WTC11 (cell line): ENCODE measurements at regions of chr20 and their contacts with region 1.

Region 1: GRCh38 chr20:43456809-43457639 is 672 bp upstream of the SRSF6 start:
- DNase-seq: peak; percentile 87
- ATAC-seq: peak; percentile 88
- H3K4me3 Mint-ChIP-seq: peak overlapping the region; percentile 83
- H3K27ac Mint-ChIP-seq: peak overlapping the region; percentile 97
- H3K4me1 Mint-ChIP-seq: peaks cover 27% of the 10 kb centered on the region
- H3K27me3 Mint-ChIP-seq: peaks cover 4% of the 10 kb centered on the region; the same call in 1 of the 2 replicates
- CTCF ChIP-seq: no peak

Region 2: DNA sequence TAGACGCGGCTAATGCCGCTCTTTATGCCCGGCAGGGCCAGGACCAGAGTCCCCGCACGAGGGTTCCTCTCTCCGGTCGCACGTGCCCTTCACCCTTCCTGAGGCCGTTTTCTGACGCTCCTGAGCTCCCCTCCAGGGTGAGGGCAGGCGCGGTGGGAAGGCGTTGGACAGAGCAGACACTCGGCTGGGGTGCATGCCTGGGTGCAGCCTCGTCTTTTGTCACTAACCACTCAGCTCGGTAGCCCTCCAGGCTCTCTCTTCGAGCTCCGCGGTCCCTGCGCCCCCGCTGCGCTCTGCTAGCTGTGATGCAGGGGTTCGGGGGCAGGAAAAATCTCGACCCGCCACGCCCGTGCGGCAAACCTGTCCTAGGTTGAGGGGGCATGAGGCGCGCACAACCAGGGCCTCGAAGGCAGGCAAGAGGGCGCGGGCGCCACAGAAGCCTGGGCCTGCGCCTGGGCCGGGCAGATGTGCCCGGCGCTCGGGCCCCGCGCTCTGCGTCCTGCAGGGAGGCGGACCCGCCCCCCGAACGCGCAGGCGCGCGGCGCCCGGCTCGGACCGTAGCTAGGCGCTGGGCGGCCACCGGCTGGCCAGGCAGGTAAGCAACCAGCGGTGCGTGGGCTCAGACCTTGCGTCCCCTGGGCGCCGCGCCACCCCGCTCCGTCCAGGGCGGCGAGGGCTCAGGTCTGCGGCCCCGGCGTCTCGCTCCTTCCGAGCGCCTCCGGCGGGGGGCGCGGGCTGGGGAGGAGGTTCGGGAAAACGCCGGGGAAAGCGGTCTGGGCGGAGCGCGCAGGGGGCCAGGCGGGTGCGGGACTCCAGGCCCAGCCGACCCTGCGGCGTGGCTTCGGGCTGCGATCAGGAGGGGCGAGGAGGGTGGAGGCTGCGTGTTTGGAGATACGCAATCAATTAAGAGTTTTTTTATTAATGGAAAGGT is 50.4 kb after region 1 on chr20 and contains the start of gene L3MBTL1:
- CTCF ChIA-PET with region 1: interaction called, 18 read pairs
- POLR2A ChIA-PET with region 1: interaction called, 23 read pairs
- DNase-seq: peak; percentile 72
- ATAC-seq: peak; percentile 67
- H3K4me3 Mint-ChIP-seq: peak within 1 kb of the TSS; percentile 68
- H3K27ac Mint-ChIP-seq: peak within 1 kb of the TSS; percentile 86
- H3K4me1 Mint-ChIP-seq: peaks cover 8% of the 10 kb centered on the region; the same call in 1 of the 2 replicates
- H3K27me3 Mint-ChIP-seq: peaks cover 44% of the 10 kb centered on the region
- CTCF ChIP-seq: no peak
- total RNA-seq, gene L3MBTL1: 28.3 to 28.7 TPM (median 28.3 TPM) in 3 replicates

Region 3: GRCh38 chr20:43514062-43514999 is 57.3 kb after region 1 on chr20:
- CTCF ChIA-PET with region 1: no interaction called
- POLR2A ChIA-PET with region 1: interaction called, 12 read pairs
- DNase-seq: peak; percentile 97
- ATAC-seq: peak; percentile 96
- H3K4me3 Mint-ChIP-seq: peak overlapping the region; percentile 87
- H3K27ac Mint-ChIP-seq: peak overlapping the region; percentile 80
- H3K4me1 Mint-ChIP-seq: peaks cover 5% of the 10 kb centered on the region
- H3K27me3 Mint-ChIP-seq: no peaks in the 10 kb centered on the region; the same call in 1 of the 2 replicates
- CTCF ChIP-seq: no peak

Region 4: GRCh38 chr20:43666376-43667328 is 209.6 kb after region 1 on chr20 and contains the start of gene MYBL2:
- CTCF ChIA-PET with region 1: interaction called, 3 read pairs
- POLR2A ChIA-PET with region 1: interaction called, 10 read pairs
- DNase-seq: peak; percentile 78
- ATAC-seq: peak; percentile 88
- H3K4me3 Mint-ChIP-seq: peak within 1 kb of the TSS; percentile 83
- H3K27ac Mint-ChIP-seq: no peak within 1 kb of the TSS
- H3K4me1 Mint-ChIP-seq: peaks cover 4% of the 10 kb centered on the region
- H3K27me3 Mint-ChIP-seq: peaks cover 22% of the 10 kb centered on the region
- CTCF ChIP-seq: no peak
- total RNA-seq, gene MYBL2: 133 to 166 TPM (median 133 TPM) in 3 replicates

Region 5: GRCh38 chr20:43691928-43692524 is 235.0 kb after region 1 on chr20:
- CTCF ChIA-PET with region 1: no interaction called
- POLR2A ChIA-PET with region 1: interaction called, 13 read pairs
- DNase-seq: peak; percentile 70
- ATAC-seq: peak; percentile 65
- H3K4me3 Mint-ChIP-seq: no peak overlapping the region
- H3K27ac Mint-ChIP-seq: no peak overlapping the region
- H3K4me1 Mint-ChIP-seq: no peaks in the 10 kb centered on the region
- H3K27me3 Mint-ChIP-seq: no peaks in the 10 kb centered on the region
- CTCF ChIP-seq: peak; percentile 42; the same call in 1 of the 2 replicates